Dendritic cell treated with granulocyte-macrophage colony-stimulating factor and Interleukin-4, amounts not matched to agents 40 ng/mL and 50 ng/mL, for 4 days (primary cell): ENCODE measurements at regions of chr5 and their contacts with region 1.

Region 1: DNA sequence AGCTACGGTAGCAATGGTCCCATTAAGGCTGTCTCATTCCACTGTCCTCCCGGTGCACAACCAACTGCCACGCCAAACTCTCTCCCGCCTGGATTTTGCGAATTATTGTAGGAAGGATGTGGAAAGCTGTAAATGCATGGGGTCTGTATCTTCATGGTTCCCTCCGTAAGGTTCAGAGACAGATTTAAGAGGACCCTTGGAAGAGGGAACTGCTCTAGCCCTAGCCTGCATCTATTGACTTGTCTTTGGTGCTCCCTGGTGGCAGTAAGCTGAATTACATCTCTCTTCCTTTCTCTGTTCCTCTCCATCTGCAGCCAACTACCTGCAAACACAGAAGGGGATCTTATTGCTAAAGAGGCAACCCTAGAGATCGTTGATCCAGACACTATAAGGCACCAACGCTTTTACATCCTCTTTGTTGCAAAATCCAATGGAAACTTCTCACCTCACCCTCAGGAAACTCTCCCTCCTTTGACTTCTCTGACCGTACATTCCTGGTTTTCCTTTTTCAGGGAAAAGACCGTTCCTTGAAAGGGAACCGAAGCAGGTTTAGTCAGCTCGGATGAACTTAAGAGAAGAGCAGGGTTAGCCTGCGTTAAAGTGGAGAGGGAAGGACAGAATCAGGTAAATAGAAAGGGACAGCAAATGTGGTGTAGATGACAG is 11.9 kb downstream of the CAPSL start:
- H3K4me3 Mint-ChIP-seq: no peak overlapping the region
- H3K27ac Mint-ChIP-seq: no peak overlapping the region
- H3K4me1 Mint-ChIP-seq: peaks cover 28% of the 10 kb centered on the region
- H3K27me3 Mint-ChIP-seq: peaks cover 30% of the 10 kb centered on the region

Region 2: GRCh38 chr5:35229076-35230037 is 697.2 kb before region 1 on chr5:
- intact Hi-C with region 1: loop called (anchors 10 kb)
- H3K4me3 Mint-ChIP-seq: peak overlapping the region; percentile 85
- H3K27ac Mint-ChIP-seq: peak overlapping the region; percentile 75
- H3K4me1 Mint-ChIP-seq: peaks cover 62% of the 10 kb centered on the region
- H3K27me3 Mint-ChIP-seq: peaks cover 5% of the 10 kb centered on the region

Region 3: DNA sequence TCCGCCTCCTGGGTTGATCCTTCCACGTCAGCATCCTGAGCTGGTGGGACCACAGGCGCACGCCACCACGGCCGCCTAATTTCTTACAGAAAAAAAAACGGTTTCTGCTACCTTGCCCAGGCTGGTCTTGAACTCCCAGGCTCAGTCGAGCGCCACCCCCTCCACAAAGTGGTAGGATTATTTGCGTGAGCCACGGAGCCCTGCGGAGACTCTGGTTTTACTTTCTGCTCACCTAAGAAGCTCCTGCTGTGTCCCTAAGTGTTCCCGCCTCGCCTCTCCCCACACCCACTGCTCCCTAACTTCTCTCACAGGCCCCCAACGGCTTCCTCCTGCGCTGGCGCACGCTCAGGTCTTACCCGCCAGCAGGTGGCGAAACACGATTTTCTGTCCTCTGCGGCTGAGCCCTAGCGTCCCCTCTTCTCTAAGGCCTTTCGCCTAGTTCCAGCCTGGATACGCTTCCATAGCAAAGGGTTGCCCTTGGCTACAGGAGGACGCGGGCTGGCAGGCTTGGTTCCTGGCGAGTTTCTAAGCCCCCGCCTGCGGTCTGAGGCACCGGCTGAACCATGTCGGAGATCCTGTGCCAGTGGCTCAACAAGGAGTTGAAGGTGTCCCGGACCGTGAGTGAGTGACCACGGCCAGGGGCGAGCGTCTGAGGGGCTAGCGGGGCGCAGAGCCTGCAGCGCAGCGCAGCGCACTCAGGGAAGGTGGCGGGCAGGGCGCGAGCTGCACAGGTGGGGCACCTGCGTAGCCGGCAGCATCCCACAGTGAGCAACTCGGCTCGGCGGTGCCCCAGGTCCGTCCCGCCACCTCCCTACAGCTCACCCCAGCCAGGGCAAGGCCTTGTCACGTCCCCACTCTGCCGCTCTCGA is 308.9 kb before region 1 on chr5 and contains the start of gene SPEF2:
- intact Hi-C with region 1: loop called (anchors 1 kb)
- H3K4me3 Mint-ChIP-seq: peak within 1 kb of the TSS; percentile 89
- H3K27ac Mint-ChIP-seq: peak within 1 kb of the TSS; percentile 76
- H3K4me1 Mint-ChIP-seq: peaks cover 29% of the 10 kb centered on the region
- H3K27me3 Mint-ChIP-seq: no peaks in the 10 kb centered on the region

Region 4: DNA sequence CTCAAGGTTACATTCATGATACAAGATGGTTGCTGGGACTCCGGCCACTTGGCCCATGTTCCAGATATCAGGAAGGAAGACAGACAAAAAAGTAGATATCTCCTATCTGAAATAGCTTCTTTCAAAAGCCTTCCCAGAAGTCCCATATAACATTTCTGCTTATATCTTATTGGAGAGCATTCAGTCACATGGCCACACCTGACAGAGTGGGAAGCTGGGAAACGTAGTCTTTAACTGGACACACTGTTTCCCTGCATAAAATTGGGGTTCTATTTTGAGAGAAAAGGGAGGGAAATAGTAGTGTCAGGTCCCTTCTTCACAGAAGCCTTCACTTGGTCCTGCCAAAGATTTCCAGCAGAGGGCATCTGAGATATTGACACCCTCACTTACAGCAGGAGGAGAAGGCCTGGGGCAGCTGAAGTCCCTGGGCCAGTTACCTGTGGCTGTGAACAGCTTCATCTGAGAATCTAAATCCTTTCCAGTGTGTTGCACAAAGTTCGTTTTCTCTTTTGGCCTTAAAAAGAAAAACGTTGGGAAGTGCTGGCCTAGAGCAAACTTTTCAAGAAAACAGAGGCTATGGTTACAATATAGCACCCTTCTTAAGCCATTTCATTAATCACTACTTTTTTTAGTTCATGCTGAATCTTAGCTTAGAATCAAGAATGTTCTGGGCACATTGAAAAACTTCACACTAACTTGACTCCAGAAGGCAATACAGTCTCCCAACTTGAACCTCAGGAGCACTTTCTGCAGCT is 275.3 kb before region 1 on chr5:
- intact Hi-C with region 1: loop called (anchors 1 kb)
- H3K4me3 Mint-ChIP-seq: no peak overlapping the region
- H3K27ac Mint-ChIP-seq: no peak overlapping the region
- H3K4me1 Mint-ChIP-seq: peaks cover 6% of the 10 kb centered on the region
- H3K27me3 Mint-ChIP-seq: no peaks in the 10 kb centered on the region

Region 5: DNA sequence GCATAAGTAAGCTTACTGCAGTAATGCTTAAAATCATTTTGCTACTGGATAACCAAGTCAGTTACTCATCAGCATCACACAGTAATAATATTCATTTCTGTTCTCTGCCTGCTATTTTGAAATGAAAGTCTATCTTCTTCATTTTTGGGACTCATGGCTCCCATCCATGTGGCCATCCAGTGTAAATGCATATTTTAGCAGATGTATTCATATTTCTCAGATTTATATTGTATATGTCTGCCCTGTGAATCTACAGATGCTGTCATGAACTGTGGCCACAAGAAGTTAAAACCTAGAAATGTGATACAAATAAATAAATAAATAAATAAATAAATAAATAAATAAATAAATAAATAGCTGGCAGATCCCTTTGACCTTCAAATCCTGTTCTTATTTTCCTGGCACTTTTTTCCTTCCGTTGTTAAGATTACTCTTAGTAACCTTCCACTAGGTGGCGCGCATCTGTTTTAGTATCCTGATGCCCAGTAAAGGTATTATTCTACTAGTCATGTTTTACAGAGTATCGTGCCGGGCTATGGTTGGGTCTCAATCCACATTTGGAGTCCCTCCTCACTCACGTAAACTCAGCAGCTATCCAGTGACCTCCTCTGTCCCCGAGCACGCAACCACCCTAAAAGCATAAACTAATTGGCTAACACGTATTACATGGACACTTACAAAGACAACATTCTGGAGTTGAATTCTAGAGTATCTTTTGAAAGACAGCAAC is 149.0 kb before region 1 on chr5:
- intact Hi-C with region 1: loop called (anchors 1 kb)
- H3K4me3 Mint-ChIP-seq: no peak overlapping the region
- H3K27ac Mint-ChIP-seq: no peak overlapping the region
- H3K4me1 Mint-ChIP-seq: peaks cover 6% of the 10 kb centered on the region
- H3K27me3 Mint-ChIP-seq: no peaks in the 10 kb centered on the region

Region 6: GRCh38 chr5:35847961-35848360 is 78.6 kb before region 1 on chr5:
- intact Hi-C with region 1: no loop called
- H3K4me3 Mint-ChIP-seq: no peak overlapping the region
- H3K27ac Mint-ChIP-seq: no peak overlapping the region
- H3K4me1 Mint-ChIP-seq: peaks cover 17% of the 10 kb centered on the region
- H3K27me3 Mint-ChIP-seq: peaks cover 11% of the 10 kb centered on the region